ENCODE measurements at regions of chr16 and their contacts with region 1.

Region 1: GRCh38 chr16:53768593-53768992 is 64.6 kb downstream of the FTO start:
- DNase-seq: peak; percentile 51
- H3K4me3 ChIP-seq: no peak overlapping the region
- H3K27ac ChIP-seq: peak overlapping the region; percentile 47
- H3K27me3 ChIP-seq: no peaks in the 10 kb centered on the region
- CTCF ChIP-seq: no peak

Region 2: GRCh38 chr16:53743149-53743566 is 25.4 kb before region 1 on chr16:
- CTCF ChIA-PET with region 1: interaction called, 13 read pairs
- POLR2A ChIA-PET with region 1: no interaction called
- DNase-seq: no peak
- H3K4me3 ChIP-seq: no peak overlapping the region
- H3K27ac ChIP-seq: no peak overlapping the region
- H3K27me3 ChIP-seq: no peaks in the 10 kb centered on the region
- CTCF ChIP-seq: peak; percentile 62